SK-N-SH (cell line): ENCODE measurements at regions of chr12 and their contacts with region 1.

Region 1: GRCh38 chr12:119695034-119695433 is 27.1 kb downstream of the PRKAB1 start:
- DNase-seq: peak; percentile 37
- H3K4me3 ChIP-seq: no peak overlapping the region
- H3K27ac ChIP-seq: no peak overlapping the region
- H3K4me1 ChIP-seq: peaks cover 18 to 20% of the 10 kb centered on the region in 2 experiments
- H3K27me3 ChIP-seq: no peaks in the 10 kb centered on the region
- CTCF ChIP-seq: peak; percentile 59
- EP300 ChIP-seq: no peak
- RAD21 ChIP-seq: 0 out of 2 replicates have a peak, but pooled peaks have one; percentile 22

Region 2: DNA sequence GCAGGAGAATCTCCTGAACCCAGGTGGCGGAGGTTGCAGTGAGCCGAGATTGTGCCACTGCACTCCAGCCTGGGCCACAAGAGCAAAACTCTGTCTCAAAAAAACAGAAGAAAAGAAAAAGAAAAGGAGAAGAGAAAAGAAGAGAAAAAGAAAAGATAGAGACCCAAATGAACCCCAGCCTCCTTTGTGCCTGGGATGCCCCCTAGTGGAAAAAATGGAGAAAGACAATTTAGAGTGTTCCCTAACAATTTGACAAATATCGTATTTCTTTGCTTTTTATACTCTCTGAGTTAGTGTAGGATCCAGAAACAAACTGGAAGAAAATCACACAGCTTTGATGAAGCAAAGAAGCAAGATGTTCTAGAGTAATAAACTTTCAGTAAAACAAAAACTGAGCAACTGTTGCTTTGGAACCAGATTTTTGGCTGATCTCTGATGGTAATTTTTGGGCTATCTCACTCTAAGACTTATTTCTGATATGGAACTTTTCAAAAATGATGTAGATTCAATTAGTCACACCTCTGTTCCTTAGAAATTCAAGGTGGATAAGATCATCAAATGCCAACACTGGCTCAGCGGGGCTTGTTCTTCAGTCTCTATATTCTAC is 45.7 kb before region 1 on chr12:
- CTCF ChIA-PET with region 1: no interaction called
- POLR2A ChIA-PET with region 1: no interaction called
- DNase-seq: peak; percentile 68
- H3K4me3 ChIP-seq: no peak overlapping the region; a peak in 1 of 4 replicates
- H3K27ac ChIP-seq: no peak overlapping the region
- H3K4me1 ChIP-seq: no peaks in the 10 kb centered on the region
- H3K27me3 ChIP-seq: no peaks in the 10 kb centered on the region
- CTCF ChIP-seq: peak; percentile 89
- EP300 ChIP-seq: no peak
- RAD21 ChIP-seq: peak; percentile 73

Region 3: GRCh38 chr12:119681961-119682638 is 12.9 kb before region 1 on chr12:
- CTCF ChIA-PET with region 1: interaction called, 10 read pairs
- POLR2A ChIA-PET with region 1: no interaction called
- DNase-seq: no peak
- H3K4me3 ChIP-seq: no peak overlapping the region
- H3K27ac ChIP-seq: no peak overlapping the region
- H3K4me1 ChIP-seq: no peaks in the 10 kb centered on the region; a peak in 1 of 4 replicates
- H3K27me3 ChIP-seq: no peaks in the 10 kb centered on the region
- CTCF ChIP-seq: no peak
- EP300 ChIP-seq: no peak
- RAD21 ChIP-seq: no peak

Region 4: GRCh38 chr12:119710352-119710964 is 15.4 kb after region 1 on chr12:
- CTCF ChIA-PET with region 1: interaction called, 11 read pairs
- POLR2A ChIA-PET with region 1: no interaction called
- DNase-seq: no peak
- H3K4me3 ChIP-seq: no peak overlapping the region
- H3K27ac ChIP-seq: no peak overlapping the region
- H3K4me1 ChIP-seq: no peaks in the 10 kb centered on the region
- H3K27me3 ChIP-seq: no peaks in the 10 kb centered on the region
- CTCF ChIP-seq: no peak
- EP300 ChIP-seq: no peak
- RAD21 ChIP-seq: no peak